ENCODE measurements at regions of chr21 and their contacts with region 1.

Region 1: DNA sequence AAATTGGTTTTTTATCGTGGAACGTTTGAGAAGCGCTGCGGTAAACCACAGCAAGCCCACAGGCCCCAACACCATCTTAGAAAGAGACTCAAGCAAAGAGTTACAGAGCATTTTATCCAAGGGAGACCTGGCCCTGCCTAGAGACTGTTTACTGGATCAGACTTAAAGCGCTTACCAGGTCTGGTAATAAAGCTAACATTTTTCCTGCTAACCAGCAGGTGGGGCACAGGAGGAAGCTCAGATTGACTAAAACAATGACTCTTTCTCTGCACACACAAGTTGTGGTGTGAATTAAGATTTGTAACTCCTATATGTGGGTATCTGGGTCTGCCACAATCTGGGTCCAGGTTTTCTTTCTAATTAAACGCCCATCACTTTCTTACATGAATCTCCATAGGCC is 136.6 kb upstream of the ETS2 start:
- DNase-seq: no peak
- ATAC-seq: no peak

Region 2: GRCh38 chr21:38645282-38645681 is 23.9 kb before region 1 on chr21:
- intact Hi-C with region 1: no loop called
- DNase-seq: no peak
- ATAC-seq: no peak

Region 3: DNA sequence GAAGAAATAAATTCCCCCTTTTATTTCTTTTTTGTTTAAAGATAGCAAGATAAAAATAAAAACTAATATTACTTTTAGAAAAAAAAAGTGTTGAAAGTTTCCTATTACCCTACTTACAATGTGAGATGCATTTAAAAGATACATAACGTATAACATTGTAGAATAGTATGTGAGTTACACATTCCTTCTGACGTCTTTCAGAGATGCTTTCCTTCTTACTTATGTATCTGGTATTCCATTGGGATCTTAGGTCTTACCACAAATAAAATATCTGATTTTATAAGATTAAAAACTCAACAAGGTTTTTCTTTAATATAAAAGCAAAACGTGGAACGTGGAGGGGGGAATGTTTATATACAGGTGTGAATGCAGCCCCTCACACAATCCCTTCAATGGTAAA is 10.7 kb before region 1 on chr21:
- intact Hi-C with region 1: no loop called
- DNase-seq: no peak
- ATAC-seq: no peak

Region 4: DNA sequence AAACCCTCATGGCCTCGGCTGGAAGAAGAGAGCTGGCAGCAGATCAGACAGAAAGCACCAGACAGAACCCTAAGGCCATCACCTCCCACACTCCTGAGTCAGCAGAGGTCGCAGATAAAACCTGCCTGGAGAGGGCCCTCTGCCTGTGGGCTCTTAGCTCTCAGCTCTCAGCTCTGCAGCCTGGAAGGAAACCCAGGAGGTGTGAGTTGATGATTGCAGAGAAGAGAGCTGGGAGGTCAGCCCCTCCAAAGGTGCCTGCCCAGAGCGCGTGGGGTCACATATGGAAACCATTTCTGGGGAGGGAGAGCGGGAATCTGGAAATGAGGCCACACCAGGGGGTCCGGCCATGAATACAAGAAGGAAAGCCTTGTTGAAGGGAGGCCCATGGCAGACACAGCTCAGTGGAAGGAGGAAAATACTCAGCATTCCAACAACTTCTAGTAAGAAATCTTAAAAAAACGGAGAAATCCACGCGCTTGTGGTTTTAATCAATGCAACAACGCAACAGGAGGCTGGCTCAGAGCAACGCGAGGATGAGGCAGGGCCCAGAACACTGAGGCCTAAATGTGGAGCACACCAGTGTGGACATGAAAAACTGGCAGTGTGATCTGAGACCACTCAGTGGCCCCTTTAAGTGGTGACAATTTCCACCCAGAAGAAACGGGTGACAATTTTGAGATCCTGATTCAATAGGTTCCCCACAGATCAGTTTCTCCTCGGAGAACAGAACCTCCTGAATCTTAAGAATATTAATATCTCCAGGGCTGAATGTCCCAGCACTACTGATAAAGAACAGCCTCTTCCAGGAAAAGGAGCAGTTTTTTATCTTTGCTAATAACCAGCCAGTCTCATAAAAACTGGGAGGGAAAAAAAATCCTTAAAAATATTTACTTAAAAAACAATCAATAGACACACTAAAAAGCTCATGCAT is 468.3 kb after region 1 on chr21:
- intact Hi-C with region 1: loop called (anchors 5 kb)
- DNase-seq: no peak
- ATAC-seq: no peak